ENCODE measurements at regions of chr2 and their contacts with region 1.

Region 1: GRCh38 chr2:152466980-152467676 is 132.2 kb downstream of the FMNL2 start:
- DNase-seq: peak; percentile 95
- H3K4me3 Mint-ChIP-seq: peak overlapping the region; percentile 66
- H3K27ac Mint-ChIP-seq: peak overlapping the region; percentile 95
- H3K4me1 Mint-ChIP-seq: peaks cover 55% of the 10 kb centered on the region
- H3K27me3 Mint-ChIP-seq: no peaks in the 10 kb centered on the region
- CTCF ChIP-seq: no peak

Region 2: DNA sequence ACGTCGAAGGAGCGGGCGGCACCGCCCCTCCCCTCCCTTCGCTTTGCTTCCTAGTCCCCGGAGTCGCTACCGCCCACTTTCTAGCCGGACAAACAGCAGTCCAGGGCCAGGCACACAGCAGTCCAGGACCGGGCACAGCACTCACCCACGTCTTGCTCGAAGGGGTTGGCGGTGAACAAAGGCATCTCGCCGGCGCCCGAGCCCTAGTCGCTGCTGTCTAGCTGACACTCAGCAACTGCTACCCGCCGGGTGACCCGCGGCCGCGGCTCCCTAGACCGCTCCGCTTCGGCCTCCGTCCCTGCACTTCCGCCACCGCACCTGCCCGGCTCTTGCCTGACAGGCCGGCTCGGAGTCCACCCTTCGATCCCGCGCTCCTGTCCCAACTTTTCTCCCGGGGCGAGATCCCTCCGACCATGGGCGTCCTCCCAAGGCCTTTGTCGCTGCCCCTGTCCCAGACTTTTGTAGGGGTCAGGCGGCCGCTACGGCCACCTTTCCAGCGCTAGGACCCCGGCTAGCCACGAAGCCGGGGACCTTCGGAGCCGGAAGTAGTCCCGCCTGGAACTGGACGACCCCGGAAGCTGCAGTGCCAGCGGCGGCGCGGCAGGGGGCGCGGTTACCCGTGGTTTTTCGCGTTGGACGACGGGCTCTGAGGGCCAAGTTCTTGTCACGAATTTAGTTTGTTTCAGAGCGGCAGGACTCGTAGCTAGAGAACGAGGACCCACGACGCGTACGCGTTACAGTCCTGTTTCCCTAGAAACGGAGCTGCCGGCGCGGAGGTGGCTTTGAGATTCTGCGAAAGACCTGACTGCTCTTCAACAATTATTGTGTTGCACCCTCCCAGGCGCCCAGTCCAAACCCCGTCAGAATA is 291.4 kb before region 1 on chr2 and contains the start of gene STAM2:
- CTCF ChIA-PET with region 1: interaction called, 3 read pairs
- POLR2A ChIA-PET with region 1: interaction called, 20 read pairs
- intact Hi-C with region 1: loop called (anchors 5 kb)
- DNase-seq: peak; percentile 92
- H3K4me3 Mint-ChIP-seq: peak within 1 kb of the TSS; percentile 94
- H3K27ac Mint-ChIP-seq: peak within 1 kb of the TSS; percentile 100
- H3K4me1 Mint-ChIP-seq: peaks cover 16% of the 10 kb centered on the region
- H3K27me3 Mint-ChIP-seq: no peaks in the 10 kb centered on the region
- CTCF ChIP-seq: peak; percentile 97
- total RNA-seq, gene STAM2: 27.6 and 35.3 TPM in 2 replicates

Region 3: DNA sequence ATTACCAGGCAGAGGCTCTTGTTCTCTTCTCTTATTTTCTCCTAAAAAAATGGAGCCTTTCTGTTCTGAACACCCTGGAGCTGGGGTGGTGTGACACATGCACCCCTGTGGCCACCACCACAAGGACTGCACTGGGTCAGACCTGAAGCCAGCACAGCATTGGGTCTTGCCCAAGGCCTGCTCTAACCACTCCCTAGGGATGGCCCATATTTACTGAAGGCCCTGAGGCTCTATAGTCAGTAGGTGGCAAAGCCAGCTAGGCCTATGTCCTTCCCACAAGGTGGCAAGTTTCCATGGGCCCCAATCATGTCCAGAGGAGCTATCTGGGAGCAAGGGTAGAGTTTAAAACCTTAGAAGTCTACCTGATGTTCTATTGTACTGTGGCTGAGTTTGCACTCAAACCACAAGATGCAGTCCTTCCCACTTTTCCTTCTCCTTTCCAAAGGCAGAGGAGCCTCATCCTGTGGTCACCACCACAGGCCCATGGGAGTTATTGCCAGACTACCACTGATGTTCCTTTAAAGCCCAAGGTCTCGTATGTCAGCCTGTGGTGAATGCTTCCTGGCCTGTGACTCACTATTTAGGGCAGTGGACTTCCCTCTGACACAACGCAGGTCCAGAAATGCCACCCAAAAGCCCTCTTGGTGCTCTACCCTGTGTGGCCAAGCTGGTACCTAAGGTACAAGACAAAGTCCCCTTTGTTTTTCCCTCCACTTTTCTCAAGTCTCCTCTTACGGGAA is 147.1 kb before region 1 on chr2:
- CTCF ChIA-PET with region 1: no interaction called
- POLR2A ChIA-PET with region 1: no interaction called
- intact Hi-C with region 1: no loop called
- DNase-seq: no peak
- H3K4me3 Mint-ChIP-seq: no peak overlapping the region
- H3K27ac Mint-ChIP-seq: no peak overlapping the region
- H3K4me1 Mint-ChIP-seq: no peaks in the 10 kb centered on the region
- H3K27me3 Mint-ChIP-seq: no peaks in the 10 kb centered on the region
- CTCF ChIP-seq: no peak

Region 4: GRCh38 chr2:152335010-152335725 is 132.0 kb before region 1 on chr2 and contains the start of gene FMNL2:
- CTCF ChIA-PET with region 1: interaction called, 21 read pairs
- POLR2A ChIA-PET with region 1: interaction called, 76 read pairs
- intact Hi-C with region 1: loop called (anchors 1 kb)
- DNase-seq: peak; percentile 82
- H3K4me3 Mint-ChIP-seq: peak within 1 kb of the TSS; percentile 94
- H3K27ac Mint-ChIP-seq: peak within 1 kb of the TSS; percentile 91
- H3K4me1 Mint-ChIP-seq: peaks cover 34% of the 10 kb centered on the region
- H3K27me3 Mint-ChIP-seq: no peaks in the 10 kb centered on the region
- CTCF ChIP-seq: no peak
- total RNA-seq, gene FMNL2: 72.9 and 76.5 TPM in 2 replicates

Region 5: DNA sequence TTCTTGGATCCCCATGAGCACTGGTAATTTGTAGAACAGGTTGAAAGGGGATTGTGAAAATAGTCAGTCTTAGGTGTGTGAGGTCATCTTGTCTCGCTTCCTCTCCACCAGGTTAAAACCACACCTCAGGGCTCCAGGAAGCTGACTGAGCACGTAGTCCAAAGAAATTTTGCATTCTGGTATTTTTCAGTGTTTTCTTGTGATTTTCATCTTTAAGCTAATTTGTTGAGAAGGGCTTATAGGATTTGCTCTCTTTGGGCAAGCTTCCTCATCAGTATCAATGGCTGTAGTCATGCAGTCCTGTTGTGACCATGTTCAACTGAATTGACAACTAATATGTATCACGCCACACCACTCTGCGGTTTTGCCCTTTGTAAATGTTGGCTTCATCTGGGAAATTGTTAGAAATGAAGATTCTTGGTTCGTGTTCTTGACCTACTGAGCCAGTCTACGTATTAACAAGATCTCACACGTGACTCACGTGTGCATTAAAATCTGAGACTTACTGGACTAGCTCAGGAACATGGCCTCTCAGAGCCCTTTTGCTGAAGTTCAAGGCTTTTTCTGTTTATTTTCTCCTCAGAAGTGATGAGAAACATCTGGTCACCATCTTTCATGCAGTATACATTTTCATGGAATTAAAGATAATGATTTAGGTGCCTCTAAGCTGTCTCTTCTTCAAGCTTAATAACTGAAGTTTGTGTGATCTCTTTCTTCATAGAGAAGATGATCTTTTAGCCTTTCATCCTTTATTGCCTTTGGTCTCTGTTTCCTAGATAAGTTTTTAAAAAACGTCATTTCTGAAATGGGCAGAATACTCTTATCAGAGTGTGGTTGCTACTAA is 99.4 kb before region 1 on chr2:
- CTCF ChIA-PET with region 1: no interaction called
- POLR2A ChIA-PET with region 1: no interaction called
- intact Hi-C with region 1: no loop called
- DNase-seq: no peak
- H3K4me3 Mint-ChIP-seq: no peak overlapping the region
- H3K27ac Mint-ChIP-seq: no peak overlapping the region
- H3K4me1 Mint-ChIP-seq: peaks cover 23% of the 10 kb centered on the region
- H3K27me3 Mint-ChIP-seq: no peaks in the 10 kb centered on the region
- CTCF ChIP-seq: no peak

Region 6: GRCh38 chr2:152445791-152446201 is 21.3 kb before region 1 on chr2:
- CTCF ChIA-PET with region 1: interaction called, 9 read pairs
- POLR2A ChIA-PET with region 1: interaction called, 58 read pairs
- intact Hi-C with region 1: no loop called
- DNase-seq: peak; percentile 84
- H3K4me3 Mint-ChIP-seq: peak overlapping the region; percentile 29
- H3K27ac Mint-ChIP-seq: peak overlapping the region; percentile 12
- H3K4me1 Mint-ChIP-seq: peaks cover 47% of the 10 kb centered on the region
- H3K27me3 Mint-ChIP-seq: no peaks in the 10 kb centered on the region
- CTCF ChIP-seq: no peak

Region 7: GRCh38 chr2:152497481-152498052 is 30.4 kb after region 1 on chr2:
- CTCF ChIA-PET with region 1: interaction called, 8 read pairs
- POLR2A ChIA-PET with region 1: interaction called, 55 read pairs
- intact Hi-C with region 1: no loop called
- DNase-seq: peak; percentile 68
- H3K4me3 Mint-ChIP-seq: peak overlapping the region; percentile 52
- H3K27ac Mint-ChIP-seq: peak overlapping the region; percentile 52
- H3K4me1 Mint-ChIP-seq: peaks cover 53% of the 10 kb centered on the region
- H3K27me3 Mint-ChIP-seq: no peaks in the 10 kb centered on the region
- CTCF ChIP-seq: no peak

Region 8: DNA sequence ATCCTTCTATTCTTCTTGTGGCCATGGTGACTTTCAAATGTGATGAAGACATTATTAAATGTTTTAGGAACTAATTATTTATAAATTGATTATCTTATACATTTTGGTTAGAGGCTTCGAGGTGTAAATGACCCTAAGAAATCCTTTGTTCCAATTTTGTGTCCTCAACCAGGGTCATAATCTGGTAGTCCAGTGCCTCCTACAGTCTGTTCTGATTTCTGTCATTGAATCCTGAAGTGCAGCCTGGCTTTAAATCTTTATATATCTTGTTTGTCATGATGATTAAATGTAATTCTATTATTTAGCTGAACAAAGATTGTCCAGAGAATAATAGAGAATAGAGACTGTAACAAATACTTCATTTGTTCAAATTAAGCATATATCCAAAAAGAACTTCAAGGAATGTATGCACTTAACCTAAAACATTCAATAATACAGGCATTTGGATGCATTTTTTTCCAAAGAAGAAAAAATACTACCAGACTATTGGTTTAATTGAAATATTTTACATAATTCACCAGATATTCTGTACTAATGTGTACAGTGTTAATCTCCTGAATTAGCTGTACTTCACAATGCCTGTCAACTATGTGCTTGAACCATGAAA is 160.3 kb after region 1 on chr2:
- CTCF ChIA-PET with region 1: interaction called, 9 read pairs
- POLR2A ChIA-PET with region 1: no interaction called
- intact Hi-C with region 1: loop called (anchors 2 kb)
- DNase-seq: peak; percentile 39
- H3K4me3 Mint-ChIP-seq: no peak overlapping the region
- H3K27ac Mint-ChIP-seq: no peak overlapping the region
- H3K4me1 Mint-ChIP-seq: no peaks in the 10 kb centered on the region
- H3K27me3 Mint-ChIP-seq: no peaks in the 10 kb centered on the region
- CTCF ChIP-seq: peak; percentile 52

Measured in MCF 10A (cell line).